CD8-positive, alpha-beta memory T cell (primary cell): ENCODE measurements at regions of chr22 and their contacts with region 1.

Region 1: GRCh38 chr22:39319270-39320022 is at the start of gene RPL3:
- DNase-seq: peak; percentile 93 to 98 (median 97)
- H3K4me3 ChIP-seq: peak within 1 kb of the TSS; percentile 99
- H3K4me3 Mint-ChIP-seq: peak within 1 kb of the TSS; percentile 95 to 100 (median 99)
- H3K27ac ChIP-seq: peak within 1 kb of the TSS; percentile 93
- H3K27ac Mint-ChIP-seq: peak within 1 kb of the TSS; percentile 90 to 99 (median 97)
- H3K4me1 ChIP-seq: peaks cover 42% of the 10 kb centered on the region
- H3K4me1 Mint-ChIP-seq: peaks cover 47 to 57% (median 52%) of the 10 kb centered on the region in 3 donors
- H3K27me3 ChIP-seq: no peaks in the 10 kb centered on the region
- H3K27me3 Mint-ChIP-seq: peaks cover 0 to 10% of the 10 kb centered on the region in 2 donors
- total RNA-seq, gene RPL3: 2,574 to 2,607 TPM

Region 2: DNA sequence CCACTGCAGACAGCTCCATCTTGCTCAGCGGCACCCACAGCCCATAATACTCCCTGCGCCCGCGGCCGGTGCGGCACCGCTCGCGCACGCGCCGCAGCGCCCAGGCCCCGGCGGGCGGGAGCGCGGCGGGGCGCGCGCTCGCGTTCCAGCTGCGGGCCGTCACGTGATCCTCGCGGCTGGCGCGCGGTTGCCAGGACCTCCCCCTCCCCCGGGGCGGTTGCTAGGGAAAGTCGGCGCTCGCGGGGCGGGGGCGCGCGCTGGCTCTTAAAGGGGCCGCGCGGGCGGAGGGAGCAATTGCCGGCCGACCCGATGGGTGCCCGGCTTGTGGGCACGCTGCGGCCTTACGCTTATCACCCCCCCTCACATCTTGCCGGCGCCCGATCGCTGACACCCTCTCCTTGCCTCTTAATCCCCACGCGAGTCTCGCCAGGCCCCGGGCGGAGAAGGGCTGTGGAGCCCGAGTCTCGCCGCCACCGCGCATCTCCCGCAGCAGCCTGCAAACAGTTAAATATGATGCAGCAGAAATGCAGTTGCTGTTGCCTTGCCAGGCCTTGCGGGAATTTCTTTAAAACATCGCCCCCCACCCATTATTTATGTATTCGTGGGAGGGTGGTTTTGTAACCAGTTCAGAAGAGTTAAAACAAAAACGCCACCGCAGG is 447.1 kb before region 1 on chr22 and contains the start of gene CBX6:
- CTCF ChIA-PET with region 1: interaction called, 33 read pairs
- POLR2A ChIA-PET with region 1: interaction called, 6 read pairs
- DNase-seq: peak; percentile 92 to 95 (median 93)
- H3K4me3 ChIP-seq: peak within 1 kb of the TSS; percentile 95
- H3K4me3 Mint-ChIP-seq: peak within 1 kb of the TSS; percentile 84 to 95 (median 92)
- H3K27ac ChIP-seq: peak within 1 kb of the TSS; percentile 64
- H3K27ac Mint-ChIP-seq: peak within 1 kb of the TSS; percentile 85 to 99 (median 90)
- H3K4me1 ChIP-seq: peaks cover 44% of the 10 kb centered on the region
- H3K4me1 Mint-ChIP-seq: peaks cover 41 to 60% (median 50%) of the 10 kb centered on the region in 3 donors
- H3K27me3 ChIP-seq: no peaks in the 10 kb centered on the region
- H3K27me3 Mint-ChIP-seq: peaks cover 0 to 4% of the 10 kb centered on the region in 2 donors
- total RNA-seq, gene CBX6: 159 to 171 TPM

Region 3: DNA sequence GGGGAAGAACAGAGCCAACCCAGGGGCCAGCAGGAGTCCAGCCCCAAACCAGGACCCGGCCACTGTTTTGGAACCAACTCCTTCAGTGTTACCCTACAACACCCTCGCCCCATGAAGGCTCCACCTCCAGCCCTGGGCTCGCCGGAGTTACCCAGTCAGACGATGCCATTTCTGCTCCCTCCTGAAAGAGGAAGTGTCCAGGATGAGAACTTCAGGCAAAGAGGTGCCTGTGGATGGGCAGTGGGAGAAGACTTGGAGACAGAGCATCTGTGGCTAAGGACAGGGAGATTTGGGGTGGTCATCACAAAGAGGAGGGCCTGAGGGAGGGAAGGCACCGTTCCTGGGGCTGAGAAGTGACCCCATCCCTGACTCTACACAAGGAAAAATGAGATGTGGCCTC is 323.3 kb before region 1 on chr22:
- CTCF ChIA-PET with region 1: no interaction called
- POLR2A ChIA-PET with region 1: no interaction called
- DNase-seq: no peak
- H3K4me3 ChIP-seq: no peak overlapping the region
- H3K4me3 Mint-ChIP-seq: no peak overlapping the region
- H3K27ac ChIP-seq: no peak overlapping the region
- H3K27ac Mint-ChIP-seq: peak overlapping the region in 1 of 8 donors; percentile 38
- H3K4me1 ChIP-seq: no peaks in the 10 kb centered on the region
- H3K4me1 Mint-ChIP-seq: peaks cover 2 to 4% (median 4%) of the 10 kb centered on the region in 3 donors
- H3K27me3 ChIP-seq: no peaks in the 10 kb centered on the region
- H3K27me3 Mint-ChIP-seq: peaks cover 8 to 30% of the 10 kb centered on the region in 2 donors

Region 4: DNA sequence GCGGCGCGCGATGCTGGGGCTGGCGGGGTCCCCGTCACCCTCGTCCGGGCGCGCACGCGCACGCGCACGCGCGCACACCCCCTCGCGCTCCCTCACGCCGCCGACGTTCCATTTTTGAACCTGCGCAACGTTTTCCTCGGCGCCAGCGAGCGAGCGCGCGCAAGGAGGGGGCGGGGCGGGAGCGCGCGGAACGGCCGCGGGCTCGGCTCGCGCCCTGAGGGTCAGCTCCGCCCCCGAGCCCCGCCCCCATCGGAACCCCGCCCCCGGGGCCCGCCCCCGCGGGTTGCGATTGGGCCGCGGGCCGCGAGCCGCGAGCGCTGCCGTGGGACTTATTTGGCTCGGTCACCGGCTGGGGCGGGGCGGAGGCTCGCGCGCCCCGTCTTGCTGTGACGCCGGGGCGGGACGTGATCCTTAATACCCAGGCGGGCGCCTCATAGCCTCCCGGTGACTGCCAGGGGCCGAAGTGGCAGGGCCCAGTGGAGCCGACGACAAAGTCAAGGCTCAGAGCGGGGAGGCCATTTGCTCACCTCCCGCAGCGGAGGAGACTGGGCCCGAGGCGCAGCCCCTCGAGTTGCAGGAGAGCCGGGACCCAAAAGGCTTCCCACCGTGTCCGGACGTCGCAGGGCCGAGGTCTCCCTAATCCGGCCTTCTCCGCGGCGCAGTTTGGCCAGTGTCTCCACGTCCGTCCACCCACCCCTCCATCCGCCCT is 166.8 kb before region 1 on chr22 and contains the start of gene CBX7:
- CTCF ChIA-PET with region 1: interaction called, 44 read pairs
- POLR2A ChIA-PET with region 1: interaction called, 65 read pairs
- DNase-seq: peak; percentile 90 to 95 (median 94)
- H3K4me3 ChIP-seq: peak within 1 kb of the TSS; percentile 91
- H3K4me3 Mint-ChIP-seq: peak within 1 kb of the TSS; percentile 83 to 94 (median 86)
- H3K27ac ChIP-seq: peak within 1 kb of the TSS; percentile 83
- H3K27ac Mint-ChIP-seq: peak within 1 kb of the TSS; percentile 89 to 97 (median 95)
- H3K4me1 ChIP-seq: peaks cover 49% of the 10 kb centered on the region
- H3K4me1 Mint-ChIP-seq: peaks cover 39 to 48% (median 40%) of the 10 kb centered on the region in 3 donors
- H3K27me3 ChIP-seq: no peaks in the 10 kb centered on the region
- H3K27me3 Mint-ChIP-seq: peaks cover 0 to 15% of the 10 kb centered on the region in 2 donors
- total RNA-seq, gene CBX7: 26.1 to 26.4 TPM

Region 5: DNA sequence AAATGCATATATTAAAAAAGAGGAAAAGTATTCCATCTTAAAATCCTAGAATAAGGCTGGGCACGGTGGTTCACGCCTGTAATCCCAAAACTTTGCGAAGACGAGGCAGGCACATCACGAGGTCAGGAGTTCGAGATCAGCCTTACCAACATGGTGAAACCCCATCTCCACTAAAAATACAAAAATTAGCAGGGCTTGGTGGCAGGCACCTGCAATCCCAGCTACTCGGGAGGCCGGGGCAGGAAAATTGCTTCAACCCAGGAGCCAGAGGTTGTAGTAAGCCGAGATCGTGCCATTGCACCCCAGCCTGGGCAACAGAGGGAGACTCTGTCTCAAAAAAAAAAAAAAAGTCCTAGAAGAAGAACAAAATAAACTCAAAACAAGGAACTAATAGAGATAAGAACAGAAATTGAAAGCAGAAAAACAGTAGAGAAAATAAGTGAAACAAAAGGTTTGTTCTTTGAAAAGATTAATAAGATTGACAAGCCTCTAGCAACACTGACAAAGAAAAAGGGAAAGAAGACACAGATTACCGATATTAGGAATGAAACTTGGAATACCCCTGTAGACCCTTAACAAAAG is 122.0 kb before region 1 on chr22:
- CTCF ChIA-PET with region 1: no interaction called
- POLR2A ChIA-PET with region 1: no interaction called
- DNase-seq: no peak
- H3K4me3 ChIP-seq: no peak overlapping the region
- H3K4me3 Mint-ChIP-seq: no peak overlapping the region
- H3K27ac ChIP-seq: no peak overlapping the region
- H3K27ac Mint-ChIP-seq: peak overlapping the region in 1 of 8 donors; percentile 35
- H3K4me1 ChIP-seq: no peaks in the 10 kb centered on the region
- H3K4me1 Mint-ChIP-seq: peaks cover 0 to 5% (median 4%) of the 10 kb centered on the region in 3 donors
- H3K27me3 ChIP-seq: no peaks in the 10 kb centered on the region
- H3K27me3 Mint-ChIP-seq: peaks cover 0 to 2% of the 10 kb centered on the region in 2 donors

Region 6: GRCh38 chr22:39236321-39237317 is 82.8 kb before region 1 on chr22:
- CTCF ChIA-PET with region 1: interaction called, 5 read pairs
- POLR2A ChIA-PET with region 1: interaction called, 14 read pairs
- DNase-seq: peak; percentile 41 to 83 (median 63)
- H3K4me3 ChIP-seq: peak overlapping the region; percentile 55
- H3K4me3 Mint-ChIP-seq: peak overlapping the region; percentile 57 to 93 (median 78)
- H3K27ac ChIP-seq: no peak overlapping the region
- H3K27ac Mint-ChIP-seq: peak overlapping the region; percentile 71 to 98 (median 88)
- H3K4me1 ChIP-seq: peaks cover 67% of the 10 kb centered on the region
- H3K4me1 Mint-ChIP-seq: peaks cover 54 to 75% (median 56%) of the 10 kb centered on the region in 3 donors
- H3K27me3 ChIP-seq: no peaks in the 10 kb centered on the region
- H3K27me3 Mint-ChIP-seq: peaks cover 0 to 6% of the 10 kb centered on the region in 2 donors

Region 7: DNA sequence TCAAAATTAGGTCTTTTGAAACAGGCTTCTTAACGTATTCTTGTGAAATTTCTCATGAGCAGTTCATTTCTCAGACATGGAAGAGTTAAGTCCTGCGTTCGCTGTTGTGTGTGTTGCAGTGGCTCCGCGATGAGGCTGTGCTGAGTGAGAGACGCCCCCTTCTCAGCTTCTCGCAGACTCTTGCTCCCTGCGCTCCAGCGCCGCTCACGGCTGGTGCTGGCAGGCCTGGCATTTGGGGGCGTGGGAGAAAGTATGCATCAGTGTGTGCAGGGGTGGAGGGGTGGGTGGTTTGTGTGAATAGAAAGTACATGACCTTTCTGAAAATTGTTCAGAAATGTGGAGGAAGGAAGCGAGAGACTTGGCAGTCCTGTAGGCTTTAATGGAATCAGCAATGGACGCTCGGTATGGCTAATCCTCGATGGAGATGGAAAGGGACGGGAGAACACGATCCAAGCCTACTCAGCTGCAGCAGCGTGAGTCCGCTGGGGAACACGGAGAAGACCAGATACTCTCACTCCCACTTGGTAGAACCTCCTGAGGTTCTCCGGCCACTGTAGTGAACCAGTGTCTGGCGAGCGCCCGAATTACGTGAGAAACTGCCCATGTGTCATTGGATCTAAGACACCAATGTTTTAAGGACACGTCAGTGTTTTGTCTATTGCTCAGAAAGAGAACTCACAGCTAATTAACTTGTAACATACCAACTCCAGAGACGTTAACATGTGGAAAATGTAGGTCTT is 86.1 kb after region 1 on chr22:
- CTCF ChIA-PET with region 1: no interaction called
- POLR2A ChIA-PET with region 1: interaction called, 14 read pairs
- DNase-seq: no peak
- H3K4me3 ChIP-seq: no peak overlapping the region
- H3K4me3 Mint-ChIP-seq: peak overlapping the region in 1 of 7 donors; percentile 78
- H3K27ac ChIP-seq: no peak overlapping the region
- H3K27ac Mint-ChIP-seq: peak overlapping the region in 1 of 8 donors; percentile 21
- H3K4me1 ChIP-seq: peaks cover 15% of the 10 kb centered on the region
- H3K4me1 Mint-ChIP-seq: peaks cover 30 to 70% (median 62%) of the 10 kb centered on the region in 3 donors
- H3K27me3 ChIP-seq: no peaks in the 10 kb centered on the region
- H3K27me3 Mint-ChIP-seq: no peaks in the 10 kb centered on the region

Region 8: DNA sequence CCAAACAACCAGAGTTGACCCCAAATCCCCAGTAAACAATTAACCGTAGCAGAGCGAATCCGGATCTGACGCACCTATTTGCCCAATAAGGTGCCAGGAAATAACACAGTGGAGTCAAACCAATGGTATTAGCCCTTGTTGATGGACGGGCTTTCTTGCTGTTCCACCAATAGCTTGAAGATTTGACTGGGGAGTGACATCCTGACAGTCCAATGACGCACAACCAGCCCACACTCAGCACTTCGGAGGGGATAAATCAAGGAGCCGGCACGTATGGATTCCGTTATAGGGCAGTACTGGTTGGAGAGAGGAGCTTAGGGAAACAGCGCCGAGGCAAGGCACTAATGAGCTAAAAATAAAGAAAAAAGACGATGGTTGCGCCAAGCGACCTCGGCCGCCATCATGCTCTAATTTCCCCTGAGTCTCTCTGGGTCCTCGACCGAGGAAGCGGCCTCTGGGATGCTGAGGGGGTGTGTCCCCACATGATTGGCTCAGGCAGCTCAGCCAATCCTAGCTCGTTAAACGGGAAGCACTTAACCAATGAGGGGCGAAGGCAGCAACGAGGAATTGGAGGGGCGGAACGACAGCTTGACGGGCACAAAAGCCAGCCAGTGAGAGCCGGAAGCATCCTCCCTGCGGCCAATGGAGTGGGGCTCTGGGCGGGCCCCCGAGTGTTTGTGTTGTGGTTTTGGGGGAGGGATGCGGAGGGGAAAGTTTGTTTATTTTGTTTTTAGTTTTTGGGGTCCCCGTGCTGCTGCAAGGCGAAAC is 724.8 kb after region 1 on chr22:
- CTCF ChIA-PET with region 1: no interaction called
- POLR2A ChIA-PET with region 1: interaction called, 11 read pairs
- DNase-seq: peak; percentile 95 to 99 (median 99)
- H3K4me3 ChIP-seq: peak overlapping the region; percentile 83
- H3K4me3 Mint-ChIP-seq: peak overlapping the region; percentile 91 to 99 (median 97)
- H3K27ac ChIP-seq: peak overlapping the region; percentile 97
- H3K27ac Mint-ChIP-seq: peak overlapping the region; percentile 98 to 100 (median 100)
- H3K4me1 ChIP-seq: peaks cover 41% of the 10 kb centered on the region
- H3K4me1 Mint-ChIP-seq: peaks cover 35 to 47% (median 47%) of the 10 kb centered on the region in 3 donors
- H3K27me3 ChIP-seq: no peaks in the 10 kb centered on the region
- H3K27me3 Mint-ChIP-seq: peaks cover 6 to 8% of the 10 kb centered on the region in 2 donors